Activated CD4-positive, alpha-beta T cell treated with anti-CD3 and anti-CD28 coated beads for 36 hours (primary cell): ENCODE measurements at regions of chr2 and their contacts with region 1.

Region 1: DNA sequence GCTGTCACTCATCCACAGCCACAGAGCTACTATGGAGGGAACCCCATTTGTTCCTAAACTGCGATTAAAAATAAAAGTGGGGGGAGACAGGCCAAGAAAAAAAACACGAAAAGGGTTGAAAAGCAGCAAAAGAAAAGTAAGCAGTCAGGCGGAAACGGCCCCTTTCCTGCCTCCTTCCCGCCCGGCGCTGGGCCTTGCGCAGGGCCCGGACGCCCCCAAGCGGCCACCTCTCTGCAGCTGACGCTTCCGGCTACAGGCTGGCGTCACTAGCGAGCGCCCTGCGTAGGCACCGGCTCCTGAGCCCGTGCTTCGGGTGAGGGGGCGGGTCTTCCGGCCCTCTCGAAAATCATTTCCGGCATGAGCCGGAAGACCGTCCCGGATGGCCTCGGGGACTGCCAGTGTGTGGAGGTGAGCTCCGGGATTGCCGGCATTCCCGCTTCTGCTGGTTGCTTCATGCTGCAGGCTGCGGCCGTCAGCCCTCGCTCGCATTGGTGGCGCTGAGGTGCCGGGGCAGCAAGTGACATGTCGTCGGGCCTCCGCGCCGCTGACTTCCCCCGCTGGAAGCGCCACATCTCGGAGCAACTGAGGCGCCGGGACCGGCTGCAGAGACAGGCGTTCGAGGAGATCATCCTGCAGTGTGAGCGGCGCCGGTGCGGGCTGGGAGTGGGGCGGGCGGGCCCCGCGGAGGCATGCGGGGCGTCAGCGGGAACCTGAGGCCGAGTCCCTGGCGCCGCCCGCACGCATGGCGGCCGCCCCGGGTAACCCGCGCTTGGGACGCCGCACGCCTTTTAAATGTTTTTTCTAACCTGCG is at the start of gene ATG16L1:
- DNase-seq: peak; percentile 98
- ATAC-seq: peak; percentile 82
- H3K4me3 Mint-ChIP-seq: peak within 1 kb of the TSS; percentile 85
- H3K27ac Mint-ChIP-seq: peak within 1 kb of the TSS; percentile 98
- H3K4me1 Mint-ChIP-seq: peaks cover 66% of the 10 kb centered on the region
- H3K27me3 Mint-ChIP-seq: no peaks in the 10 kb centered on the region
- total RNA-seq, gene ATG16L1: 23.0 to 24.6 TPM

Region 2: GRCh38 chr2:232550354-232551249 is 700.9 kb before region 1 on chr2 and contains the starts of genes EIF4E2 and TIGD1:
- CTCF ChIA-PET with region 1: no interaction called
- POLR2A ChIA-PET with region 1: no interaction called
- intact Hi-C with region 1: loop called (anchors 1 to 5 kb)
- DNase-seq: peak; percentile 96
- ATAC-seq: peak; percentile 95
- H3K4me3 Mint-ChIP-seq: peak within 1 kb of the TSS; percentile 98
- H3K27ac Mint-ChIP-seq: peak within 1 kb of the TSS; percentile 100
- H3K4me1 Mint-ChIP-seq: peaks cover 66% of the 10 kb centered on the region
- H3K27me3 Mint-ChIP-seq: no peaks in the 10 kb centered on the region
- total RNA-seq, gene EIF4E2: 57.0 to 68.0 TPM
- total RNA-seq, gene TIGD1: 7.6 to 7.9 TPM

Region 3: GRCh38 chr2:232761301-232761907 is 490.1 kb before region 1 on chr2:
- CTCF ChIA-PET with region 1: no interaction called
- POLR2A ChIA-PET with region 1: no interaction called
- intact Hi-C with region 1: loop called (anchors 1 to 10 kb)
- DNase-seq: peak; percentile 58
- ATAC-seq: no peak
- H3K4me3 Mint-ChIP-seq: no peak overlapping the region
- H3K27ac Mint-ChIP-seq: no peak overlapping the region
- H3K4me1 Mint-ChIP-seq: peaks cover 17% of the 10 kb centered on the region
- H3K27me3 Mint-ChIP-seq: no peaks in the 10 kb centered on the region

Region 4: DNA sequence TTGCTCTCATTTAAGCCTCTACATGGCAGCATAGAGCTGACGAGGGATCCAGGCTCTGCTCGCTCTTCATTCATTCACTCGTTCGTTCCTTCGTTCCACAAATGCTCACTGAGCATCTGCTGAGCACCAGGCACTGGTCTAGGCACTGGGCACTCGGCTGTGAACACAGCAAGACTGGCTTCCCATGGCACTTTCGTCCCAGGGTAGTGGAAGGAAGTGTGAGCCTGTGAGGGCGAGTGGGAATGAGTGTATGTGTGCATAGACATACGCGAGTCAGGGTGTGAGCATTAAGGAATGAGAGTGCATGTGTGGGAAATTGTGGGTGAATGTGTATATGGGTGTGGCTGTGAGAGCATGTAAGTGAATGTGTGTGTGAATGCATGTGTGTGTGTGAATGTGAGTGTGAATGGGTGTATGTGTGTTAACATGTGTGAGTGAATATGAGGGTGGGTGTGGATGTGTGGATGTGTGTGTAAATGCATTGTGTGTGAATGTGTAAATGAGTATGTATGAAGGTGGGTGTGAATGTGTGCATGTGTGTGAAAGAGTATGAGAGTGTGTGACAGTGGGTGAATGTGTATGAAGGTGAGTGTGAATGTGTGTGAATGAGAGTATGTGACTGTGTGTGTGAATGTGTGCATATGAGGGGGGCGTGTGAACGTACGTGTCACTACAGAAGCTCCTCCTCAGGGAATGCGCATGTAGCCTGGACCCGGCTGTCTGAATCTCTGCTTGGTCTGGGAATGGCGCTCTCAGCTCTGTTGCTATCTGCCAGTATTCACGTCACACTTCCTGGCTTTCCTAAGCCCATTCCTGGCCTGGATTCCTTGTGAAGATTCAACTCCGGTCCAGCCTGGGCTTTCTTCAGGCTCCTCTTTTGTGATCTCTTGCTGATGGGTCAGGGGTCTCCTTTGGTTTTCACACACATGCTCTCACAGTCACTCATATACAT is 352.6 kb before region 1 on chr2:
- CTCF ChIA-PET with region 1: no interaction called
- POLR2A ChIA-PET with region 1: no interaction called
- intact Hi-C with region 1: loop called in 1 of 2 experiments (anchors 2 kb)
- DNase-seq: no peak
- ATAC-seq: peak; percentile 8
- H3K4me3 Mint-ChIP-seq: no peak overlapping the region
- H3K27ac Mint-ChIP-seq: no peak overlapping the region
- H3K4me1 Mint-ChIP-seq: peaks cover 15% of the 10 kb centered on the region
- H3K27me3 Mint-ChIP-seq: no peaks in the 10 kb centered on the region

Region 5: DNA sequence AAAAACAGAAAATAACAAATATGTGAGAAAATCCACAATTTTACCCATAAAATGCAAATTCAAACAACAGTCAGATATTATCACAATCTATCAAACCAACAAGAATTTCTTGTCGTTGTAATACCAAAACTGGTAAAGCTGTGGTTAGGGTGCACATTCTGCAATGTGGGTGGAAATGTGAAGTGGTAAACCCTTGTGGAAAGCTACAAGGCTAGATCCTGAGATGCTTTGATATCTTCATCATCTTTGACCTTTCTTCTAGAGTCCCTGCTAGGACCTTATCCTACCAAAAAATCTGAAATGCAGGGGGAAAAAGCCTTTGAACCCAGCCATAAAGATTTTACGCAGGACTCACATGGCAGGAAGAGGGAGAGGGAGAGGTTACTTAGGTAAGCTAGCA is 17.2 kb before region 1 on chr2:
- CTCF ChIA-PET with region 1: interaction called, 13 read pairs
- POLR2A ChIA-PET with region 1: no interaction called
- intact Hi-C with region 1: loop called (anchors 1 to 2 kb)
- DNase-seq: peak; percentile 45
- ATAC-seq: peak; percentile 27
- H3K4me3 Mint-ChIP-seq: peak overlapping the region; percentile 16
- H3K27ac Mint-ChIP-seq: peak overlapping the region; percentile 72
- H3K4me1 Mint-ChIP-seq: peaks cover 37% of the 10 kb centered on the region
- H3K27me3 Mint-ChIP-seq: no peaks in the 10 kb centered on the region

Region 6: GRCh38 chr2:233854241-233854981 is 602.9 kb after region 1 on chr2 and contains the start of gene HJURP:
- CTCF ChIA-PET with region 1: no interaction called
- POLR2A ChIA-PET with region 1: no interaction called
- intact Hi-C with region 1: loop called in 1 of 2 experiments (anchors 10 kb)
- DNase-seq: peak; percentile 96
- ATAC-seq: peak; percentile 95
- H3K4me3 Mint-ChIP-seq: peak within 1 kb of the TSS; percentile 97
- H3K27ac Mint-ChIP-seq: peak within 1 kb of the TSS; percentile 98
- H3K4me1 Mint-ChIP-seq: peaks cover 26% of the 10 kb centered on the region
- H3K27me3 Mint-ChIP-seq: no peaks in the 10 kb centered on the region
- total RNA-seq, gene HJURP: 94.6 to 111 TPM